Mammary epithelial cell (primary cell): ENCODE measurements at regions of chr14 and their contacts with region 1.

Region 1: GRCh38 chr14:93035917-93036651 is 79.6 kb downstream of the ITPK1 start:
- DNase-seq: peak; percentile 38
- H3K4me3 ChIP-seq: no peak overlapping the region
- H3K27ac ChIP-seq: peak overlapping the region; percentile 59
- H3K4me1 ChIP-seq: peaks cover 73% of the 10 kb centered on the region
- H3K27me3 ChIP-seq: no peaks in the 10 kb centered on the region
- CTCF ChIP-seq: no peak

Region 2: DNA sequence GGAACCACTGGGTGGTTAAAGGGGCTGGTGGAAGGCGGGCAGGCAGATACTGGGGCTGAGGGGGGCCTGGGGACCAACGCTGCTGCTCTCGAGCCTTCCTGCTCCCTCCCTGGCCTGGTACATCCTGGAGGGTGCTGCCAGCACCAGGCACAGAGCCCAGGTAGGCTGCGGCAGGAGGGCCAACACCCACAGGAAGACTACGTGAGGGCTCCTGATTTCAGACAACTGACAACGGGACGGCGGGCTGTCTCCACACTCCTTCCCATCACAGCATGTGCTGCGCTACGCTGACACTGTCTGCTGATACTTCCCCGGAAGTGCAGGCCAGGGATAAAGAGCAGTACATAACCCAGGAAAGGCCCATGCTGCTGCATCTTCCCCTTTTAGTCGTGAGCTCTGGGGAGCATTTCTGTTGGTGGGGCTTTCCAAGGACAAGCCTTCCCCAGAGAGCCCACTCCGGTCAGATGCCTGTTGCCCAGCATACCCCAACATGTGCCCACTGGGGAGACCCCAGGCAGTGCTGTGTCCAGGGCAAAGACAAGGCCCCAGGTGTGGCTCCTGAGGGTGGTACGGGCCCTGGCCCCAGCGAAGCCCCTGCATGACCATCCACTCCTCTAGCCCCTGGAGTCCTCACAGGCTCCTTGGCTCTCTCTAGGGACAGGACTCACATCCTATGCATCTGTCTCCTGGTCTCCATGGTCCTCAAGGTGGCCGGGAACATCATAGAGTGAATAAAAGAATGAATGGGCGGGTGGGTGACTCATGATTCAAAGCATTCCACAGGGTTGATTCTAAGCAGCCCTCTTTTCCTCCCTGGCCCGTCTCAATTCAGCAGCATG is 75.2 kb before region 1 on chr14:
- CTCF ChIA-PET with region 1: no interaction called
- dilution Hi-C with region 1: loop called (anchors 5 kb)
- in situ Hi-C with region 1: no loop called
- intact Hi-C with region 1: no loop called
- DNase-seq: peak; percentile 34
- H3K4me3 ChIP-seq: no peak overlapping the region
- H3K27ac ChIP-seq: peak overlapping the region; percentile 3
- H3K4me1 ChIP-seq: peaks cover 11% of the 10 kb centered on the region
- H3K27me3 ChIP-seq: no peaks in the 10 kb centered on the region
- CTCF ChIP-seq: no peak

Region 3: GRCh38 chr14:93163570-93163969 is 127.5 kb after region 1 on chr14:
- CTCF ChIA-PET with region 1: no interaction called
- dilution Hi-C with region 1: no loop called
- in situ Hi-C with region 1: no loop called
- intact Hi-C with region 1: no loop called
- DNase-seq: no peak
- H3K4me3 ChIP-seq: no peak overlapping the region
- H3K27ac ChIP-seq: no peak overlapping the region
- H3K4me1 ChIP-seq: no peaks in the 10 kb centered on the region
- H3K27me3 ChIP-seq: no peaks in the 10 kb centered on the region
- CTCF ChIP-seq: no peak